Aorta (tissue), 5 donors: ENCODE measurements at regions of chr2 and their contacts with region 1.

Region 1: DNA sequence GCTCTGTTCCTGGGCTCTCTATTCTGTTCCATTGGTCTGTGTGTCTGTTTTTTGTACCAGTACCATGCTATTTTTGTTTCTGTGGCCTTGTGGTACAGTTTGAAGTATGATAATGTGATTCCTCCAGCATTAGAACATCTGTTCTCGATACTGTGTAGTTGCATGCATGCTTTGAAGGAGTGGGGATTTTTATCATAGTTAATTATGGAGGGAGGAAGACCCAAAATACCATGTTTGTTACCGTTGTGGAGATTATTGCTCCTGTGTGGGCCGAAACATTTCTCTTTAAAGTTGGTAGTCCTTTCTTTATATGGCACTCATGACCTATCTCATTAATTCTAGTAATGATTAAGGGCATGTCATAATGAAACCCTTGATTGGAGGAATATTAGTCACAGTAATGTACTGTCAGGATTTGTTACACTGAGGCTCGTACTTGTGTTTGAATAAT is 87.6 kb downstream of the TTC27 start:
- DNase-seq: no peak
- ATAC-seq: no peak
- H3K4me3 ChIP-seq: no peak overlapping the region
- H3K27ac ChIP-seq: peak overlapping the region in 1 of 2 donors; percentile 36
- H3K4me1 ChIP-seq: peaks cover 8 to 21% of the 10 kb centered on the region in 2 donors
- H3K27me3 ChIP-seq: no peaks in the 10 kb centered on the region

Region 2: GRCh38 chr2:32627814-32628579 is 87.4 kb before region 1 on chr2 and contains the start of gene TTC27:
- intact Hi-C with region 1: loop called in 1 of 2 experiments (anchors 10 kb)
- DNase-seq: peak; percentile 97 to 98
- ATAC-seq: peak; percentile 99
- H3K4me3 ChIP-seq: peak within 1 kb of the TSS; percentile 50 to 72
- H3K27ac ChIP-seq: peak within 1 kb of the TSS in 1 of 2 donors; percentile 92
- H3K4me1 ChIP-seq: peaks cover under 1 to 5% of the 10 kb centered on the region in 2 donors
- H3K27me3 ChIP-seq: no peaks in the 10 kb centered on the region
- total RNA-seq, gene TTC27: 16.2 to 22.4 TPM

Region 3: DNA sequence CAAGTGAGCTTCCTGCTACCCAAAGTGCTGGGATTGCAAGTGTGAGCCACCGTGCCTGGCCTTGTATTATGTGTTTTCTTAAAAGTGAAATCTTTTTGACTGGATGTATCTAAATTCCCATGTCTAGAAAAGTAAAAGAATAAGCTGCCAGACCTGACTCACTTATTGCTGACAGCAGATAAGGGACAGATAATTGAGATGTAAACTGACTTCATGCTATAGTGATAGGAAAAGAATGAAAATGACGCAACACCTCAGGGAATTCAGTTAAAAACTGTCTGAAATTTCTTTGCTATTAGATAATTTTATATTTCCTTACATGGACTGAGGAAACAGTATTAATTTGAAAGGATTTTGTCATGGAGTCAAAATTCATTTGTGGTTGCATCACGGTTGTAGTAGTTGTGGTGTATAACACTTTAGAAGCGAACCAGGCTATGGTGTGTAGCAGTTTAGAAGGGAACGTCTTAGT is 68.2 kb before region 1 on chr2:
- intact Hi-C with region 1: loop called in 1 of 2 experiments (anchors 2 kb)
- DNase-seq: no peak
- ATAC-seq: peak; percentile 87
- H3K4me3 ChIP-seq: no peak overlapping the region
- H3K27ac ChIP-seq: peak overlapping the region; percentile 87 to 90
- H3K4me1 ChIP-seq: no peaks in the 10 kb centered on the region
- H3K27me3 ChIP-seq: no peaks in the 10 kb centered on the region

Region 4: DNA sequence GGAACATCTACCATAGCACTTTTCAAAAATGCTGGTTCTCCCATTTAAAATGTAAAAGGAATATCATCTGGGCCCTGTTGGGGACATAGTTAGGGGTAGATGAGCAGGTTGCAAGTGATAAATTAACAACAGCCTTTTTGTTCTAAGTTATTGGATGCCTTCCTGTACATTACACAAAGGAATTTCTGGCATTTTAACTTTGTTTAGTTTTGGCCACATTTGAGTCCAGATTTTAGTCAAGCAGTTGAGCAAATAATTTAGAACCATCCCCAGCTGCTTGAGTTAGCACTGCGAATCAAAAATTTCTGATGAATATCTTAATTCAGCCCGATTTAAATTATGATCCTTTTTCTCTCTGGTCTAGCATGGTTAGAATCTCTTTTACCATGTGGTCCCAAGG is 36.8 kb after region 1 on chr2:
- intact Hi-C with region 1: no loop called
- DNase-seq: no peak
- ATAC-seq: no peak
- H3K4me3 ChIP-seq: no peak overlapping the region
- H3K27ac ChIP-seq: no peak overlapping the region
- H3K4me1 ChIP-seq: peaks cover 2 to 3% of the 10 kb centered on the region in 2 donors
- H3K27me3 ChIP-seq: no peaks in the 10 kb centered on the region

Region 5: GRCh38 chr2:32904751-32905150 is 189.3 kb after region 1 on chr2:
- intact Hi-C with region 1: no loop called
- DNase-seq: no peak
- ATAC-seq: no peak
- H3K4me3 ChIP-seq: no peak overlapping the region
- H3K27ac ChIP-seq: no peak overlapping the region
- H3K4me1 ChIP-seq: no peaks in the 10 kb centered on the region
- H3K27me3 ChIP-seq: no peaks in the 10 kb centered on the region

Region 6: DNA sequence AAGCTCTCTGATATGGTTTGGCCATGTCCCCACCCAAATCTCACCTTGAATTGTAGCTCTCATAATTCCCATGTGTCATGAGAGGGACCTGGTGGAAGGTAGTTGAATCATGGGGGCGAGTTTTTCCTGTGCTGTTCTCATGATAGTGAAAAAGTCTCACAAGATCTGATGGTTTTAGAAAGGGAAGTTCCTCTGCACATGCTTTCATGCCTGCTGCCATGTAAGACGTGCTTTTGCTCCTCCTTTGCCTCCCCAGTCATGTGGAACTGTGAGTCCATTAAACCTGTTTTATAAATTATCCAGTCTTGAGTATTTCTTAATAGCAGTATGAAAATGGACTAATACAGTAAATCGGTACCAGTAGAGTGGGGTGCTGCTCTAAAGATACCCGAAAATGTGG is 266.2 kb after region 1 on chr2:
- intact Hi-C with region 1: no loop called
- DNase-seq: no peak
- ATAC-seq: no peak
- H3K4me3 ChIP-seq: no peak overlapping the region
- H3K27ac ChIP-seq: no peak overlapping the region
- H3K4me1 ChIP-seq: no peaks in the 10 kb centered on the region
- H3K27me3 ChIP-seq: no peaks in the 10 kb centered on the region